ENCODE measurements at regions of chr1 and their contacts with region 1.

Region 1: DNA sequence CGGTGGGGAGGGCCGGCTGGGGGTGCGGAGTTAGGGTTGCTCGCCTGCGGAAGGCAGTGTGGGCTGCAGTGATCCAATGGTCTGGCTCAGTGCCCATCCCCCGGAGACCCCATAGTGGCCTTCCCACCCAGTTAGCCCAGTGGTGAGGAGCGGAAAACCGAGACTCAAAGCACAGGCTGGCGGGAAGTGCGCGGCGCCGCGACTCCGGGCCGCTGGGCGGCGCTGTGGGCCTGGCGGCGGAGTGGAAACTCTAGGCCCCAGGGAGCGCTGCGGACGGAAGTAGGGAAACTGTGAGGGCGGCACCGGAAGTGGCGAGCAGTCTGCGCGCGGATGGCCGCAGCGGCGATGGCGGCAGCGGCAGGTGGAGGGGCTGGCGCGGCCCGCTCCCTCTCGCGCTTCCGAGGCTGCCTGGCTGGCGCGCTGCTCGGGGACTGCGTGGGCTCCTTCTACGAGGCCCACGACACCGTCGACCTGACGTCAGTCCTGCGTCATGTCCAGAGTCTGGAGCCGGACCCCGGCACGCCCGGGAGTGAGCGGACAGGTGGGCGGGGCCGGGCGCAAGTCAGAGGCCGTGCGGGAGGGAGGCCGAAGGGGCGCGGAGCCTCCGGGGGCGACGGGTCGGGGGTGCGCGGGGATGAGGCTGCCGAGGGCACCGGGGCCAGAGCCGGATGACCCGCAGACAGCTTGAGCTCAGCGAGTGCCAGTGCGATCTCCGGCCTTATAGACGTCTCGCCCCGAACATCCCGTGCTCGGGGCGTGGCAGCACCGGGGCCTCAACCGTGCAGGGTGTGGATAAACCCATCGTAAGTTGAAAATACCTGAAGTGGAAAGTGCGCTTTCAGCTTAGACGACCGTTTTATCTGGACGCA is at the start of gene ADPRS:
- DNase-seq: peak; percentile 89
- ATAC-seq: peak; percentile 89 to 96 (median 92)
- H3K4me3 ChIP-seq: peak within 1 kb of the TSS; percentile 81 to 99 (median 92)
- H3K27ac ChIP-seq: peak within 1 kb of the TSS; percentile 74 to 98 (median 90)
- H3K4me1 ChIP-seq: peaks cover 3 to 53% (median 48%) of the 10 kb centered on the region in 9 donors
- H3K27me3 ChIP-seq: peaks cover 4 to 23% (median 20%) of the 10 kb centered on the region in 7 donors
- CTCF ChIP-seq: peak; percentile 96 to 100 (median 99)
- total RNA-seq, gene ADPRS: 11.0 to 24.3 (median 15.6) TPM

Region 2: GRCh38 chr1:35461966-35462651 is 626.7 kb before region 1 on chr1:
- intact Hi-C with region 1: no loop called
- DNase-seq: no peak
- ATAC-seq: no peak
- H3K4me3 ChIP-seq: no peak overlapping the region
- H3K27ac ChIP-seq: no peak overlapping the region
- H3K4me1 ChIP-seq: peaks cover 0 to 10% (median 0%) of the 10 kb centered on the region in 9 donors
- H3K27me3 ChIP-seq: no peaks in the 10 kb centered on the region
- CTCF ChIP-seq: no peak

Region 3: DNA sequence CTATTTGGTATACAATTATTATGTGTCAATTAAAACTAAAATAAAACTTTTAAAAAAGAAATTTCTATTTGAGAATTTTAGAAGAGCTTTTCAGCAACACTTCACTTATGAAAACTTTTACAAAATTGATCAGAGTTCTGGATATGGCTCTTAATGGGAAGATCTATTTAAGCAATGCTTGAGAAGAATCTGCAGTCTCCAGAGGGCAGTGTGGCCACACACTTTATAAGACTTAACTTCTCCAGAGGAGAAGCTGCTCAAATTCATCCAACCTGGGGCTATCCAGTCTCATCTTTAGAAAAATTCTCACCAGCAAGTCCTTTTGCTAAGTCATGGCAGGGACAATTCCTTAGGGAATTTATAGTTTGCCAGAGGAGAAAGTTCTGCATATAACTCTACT is 231.0 kb before region 1 on chr1:
- intact Hi-C with region 1: loop called in 1 of 10 experiments (anchors 5 kb)
- DNase-seq: no peak
- ATAC-seq: peak in 1 of 8 donors; percentile 45
- H3K4me3 ChIP-seq: no peak overlapping the region
- H3K27ac ChIP-seq: no peak overlapping the region
- H3K4me1 ChIP-seq: peaks cover 0 to 21% (median 0%) of the 10 kb centered on the region in 9 donors
- H3K27me3 ChIP-seq: no peaks in the 10 kb centered on the region
- CTCF ChIP-seq: peak in 4 of 9 donors; percentile 26 to 40 (median 33)

Region 4: GRCh38 chr1:35882945-35883634 is 205.7 kb before region 1 on chr1 and contains the start of gene AGO1:
- intact Hi-C with region 1: loop called in 2 of 10 experiments (anchors 10 kb)
- DNase-seq: peak; percentile 94 to 97
- ATAC-seq: peak; percentile 95 to 99 (median 97)
- H3K4me3 ChIP-seq: peak within 1 kb of the TSS; percentile 90 to 100 (median 98)
- H3K27ac ChIP-seq: peak within 1 kb of the TSS in 9 of 10 donors; percentile 78 to 91 (median 84)
- H3K4me1 ChIP-seq: peaks cover 2 to 51% (median 36%) of the 10 kb centered on the region in 9 donors
- H3K27me3 ChIP-seq: no peaks in the 10 kb centered on the region
- CTCF ChIP-seq: peak; percentile 93 to 99 (median 98)
- total RNA-seq, gene AGO1: 19.5 to 26.5 (median 22.5) TPM

Region 5: GRCh38 chr1:35930593-35931445 is 158.0 kb before region 1 on chr1 and contains the start of gene AGO3:
- intact Hi-C with region 1: loop called in 1 of 10 experiments (anchors 10 kb)
- DNase-seq: peak; percentile 82 to 83
- ATAC-seq: peak; percentile 89 to 97 (median 96)
- H3K4me3 ChIP-seq: peak within 1 kb of the TSS; percentile 81 to 98 (median 94)
- H3K27ac ChIP-seq: peak within 1 kb of the TSS; percentile 97 to 100 (median 99)
- H3K4me1 ChIP-seq: peaks cover 5 to 49% (median 36%) of the 10 kb centered on the region in 9 donors
- H3K27me3 ChIP-seq: no peaks in the 10 kb centered on the region
- CTCF ChIP-seq: no peak
- total RNA-seq, gene AGO3: 12.3 to 20.7 (median 15.1) TPM

Measured in heart right ventricle (tissue), 16 donors.